Breast epithelium (tissue), 4 donors: ENCODE measurements at regions of chr3 and their contacts with region 1.

Region 1: GRCh38 chr3:7695049-7695448 is 806.6 kb upstream of the LMCD1 start:
- DNase-seq: no peak
- H3K4me3 ChIP-seq: no peak overlapping the region
- H3K27ac ChIP-seq: no peak overlapping the region
- H3K4me1 ChIP-seq: no peaks in the 10 kb centered on the region
- H3K27me3 ChIP-seq: no peaks in the 10 kb centered on the region
- CTCF ChIP-seq: no peak
- POLR2A ChIP-seq: no peak

Region 2: DNA sequence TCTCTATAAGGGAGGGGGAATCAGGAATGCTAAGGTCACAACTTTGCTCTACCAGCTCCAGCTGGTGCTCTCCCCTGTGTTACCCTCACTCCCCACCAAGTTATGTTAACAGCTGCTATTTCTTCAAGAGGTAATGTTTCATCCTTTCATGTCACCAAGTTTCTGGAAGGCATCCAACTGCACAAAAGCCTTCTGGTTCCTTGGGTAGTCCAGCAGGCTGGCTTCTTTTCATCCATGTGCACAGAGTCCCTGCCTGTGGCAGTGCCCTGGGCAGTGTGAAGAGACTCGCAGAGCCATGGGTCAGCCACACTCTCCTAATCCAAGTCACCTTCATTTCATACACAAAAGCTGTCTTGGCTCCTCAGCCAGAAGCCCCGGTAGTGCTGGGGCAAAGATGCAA is 69.1 kb after region 1 on chr3:
- intact Hi-C with region 1: loop called (anchors 5 kb)
- DNase-seq: no peak
- H3K4me3 ChIP-seq: no peak overlapping the region
- H3K27ac ChIP-seq: no peak overlapping the region
- H3K4me1 ChIP-seq: no peaks in the 10 kb centered on the region
- H3K27me3 ChIP-seq: no peaks in the 10 kb centered on the region
- CTCF ChIP-seq: no peak
- POLR2A ChIP-seq: no peak